ENCODE measurements at regions of chr18 and their contacts with region 1.

Region 1: DNA sequence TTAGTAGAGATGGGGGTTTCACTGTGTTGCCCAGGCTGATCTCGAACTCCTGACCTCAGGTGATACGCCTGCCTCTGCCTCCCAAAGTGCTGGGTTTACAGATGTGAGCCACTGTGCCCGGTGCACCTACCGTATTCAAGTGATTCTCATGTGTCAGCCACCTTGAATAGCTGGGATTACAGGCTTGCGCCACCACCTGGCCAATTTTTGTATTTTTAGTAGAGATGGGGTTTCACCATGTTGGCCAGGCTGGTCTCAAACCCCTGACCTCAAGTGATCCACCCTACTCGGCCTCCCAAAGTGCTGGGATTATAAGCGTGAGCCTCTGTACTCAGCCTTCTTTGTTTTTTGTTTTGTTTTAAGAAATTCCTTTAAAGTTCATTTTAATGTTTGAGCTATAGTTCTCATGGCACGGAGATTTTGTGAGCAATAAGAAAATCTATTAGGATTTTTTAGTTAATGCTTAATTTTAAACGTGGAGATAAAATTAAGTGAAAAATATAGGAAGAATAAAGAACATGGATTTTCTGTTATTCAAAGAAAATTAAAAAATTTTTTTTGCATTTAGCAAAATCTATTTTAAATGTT is 242.6 kb downstream of the PHLPP1 start:
- DNase-seq: peak; percentile 40
- ATAC-seq: peak; percentile 98
- H3K4me3 ChIP-seq: no peak overlapping the region
- H3K27ac ChIP-seq: no peak overlapping the region
- H3K4me1 ChIP-seq: no peaks in the 10 kb centered on the region
- H3K27me3 ChIP-seq: no peaks in the 10 kb centered on the region
- CTCF ChIP-seq: peak; percentile 49 to 64 (median 61); a peak in 4 of 6 replicates
- POLR2A ChIP-seq: no peak
- RAD21 ChIP-seq: peak; percentile 77

Region 2: GRCh38 chr18:62637807-62638687 is 319.9 kb before region 1 on chr18:
- CTCF ChIA-PET with region 1: interaction called, 14 read pairs
- POLR2A ChIA-PET with region 1: no interaction called
- RAD21 ChIA-PET with region 1: no interaction called
- intact Hi-C with region 1: loop called (anchors 1 kb)
- DNase-seq: peak; percentile 44
- ATAC-seq: peak; percentile 91
- H3K4me3 ChIP-seq: no peak overlapping the region
- H3K27ac ChIP-seq: no peak overlapping the region
- H3K4me1 ChIP-seq: peaks cover 6 to 12% of the 10 kb centered on the region in 2 experiments; a peak in 3 of 4 replicates
- H3K27me3 ChIP-seq: no peaks in the 10 kb centered on the region
- CTCF ChIP-seq: peak; percentile 60 to 93 (median 89); a peak in 5 of 6 replicates
- POLR2A ChIP-seq: no peak
- RAD21 ChIP-seq: peak; percentile 69

Region 3: GRCh38 chr18:62714671-62715435 is 243.1 kb before region 1 on chr18:
- CTCF ChIA-PET with region 1: interaction called, 24 read pairs
- POLR2A ChIA-PET with region 1: no interaction called
- RAD21 ChIA-PET with region 1: interaction called, 3 to 7 read pairs
- intact Hi-C with region 1: loop called (anchors 1 kb)
- DNase-seq: peak; percentile 99
- ATAC-seq: peak; percentile 90
- H3K4me3 ChIP-seq: peak overlapping the region; percentile 51 to 59
- H3K27ac ChIP-seq: no peak overlapping the region
- H3K4me1 ChIP-seq: peaks cover 8 to 27% of the 10 kb centered on the region in 2 experiments
- H3K27me3 ChIP-seq: no peaks in the 10 kb centered on the region
- CTCF ChIP-seq: peak in 2 of 3 experiments; percentile 72 to 77; a peak in 4 of 6 replicates
- POLR2A ChIP-seq: no peak
- RAD21 ChIP-seq: no peak

Region 4: GRCh38 chr18:62838475-62839098 is 119.4 kb before region 1 on chr18:
- CTCF ChIA-PET with region 1: no interaction called
- POLR2A ChIA-PET with region 1: no interaction called
- RAD21 ChIA-PET with region 1: no interaction called
- intact Hi-C with region 1: no loop called
- DNase-seq: no peak
- ATAC-seq: no peak
- H3K4me3 ChIP-seq: no peak overlapping the region
- H3K27ac ChIP-seq: no peak overlapping the region
- H3K4me1 ChIP-seq: no peaks in the 10 kb centered on the region
- H3K27me3 ChIP-seq: no peaks in the 10 kb centered on the region
- CTCF ChIP-seq: no peak
- POLR2A ChIP-seq: no peak
- RAD21 ChIP-seq: no peak

Measured in HCT116 (cell line).